Activated naive CD4-positive, alpha-beta T cell treated with anti-CD3 and anti-CD28 coated beads, Interleukin-2, amount 10 ng/mL, durations not matched to agents 7 days and 5 days (primary cell): ENCODE measurements at regions of chr9 and their contacts with region 1.

Region 1: DNA sequence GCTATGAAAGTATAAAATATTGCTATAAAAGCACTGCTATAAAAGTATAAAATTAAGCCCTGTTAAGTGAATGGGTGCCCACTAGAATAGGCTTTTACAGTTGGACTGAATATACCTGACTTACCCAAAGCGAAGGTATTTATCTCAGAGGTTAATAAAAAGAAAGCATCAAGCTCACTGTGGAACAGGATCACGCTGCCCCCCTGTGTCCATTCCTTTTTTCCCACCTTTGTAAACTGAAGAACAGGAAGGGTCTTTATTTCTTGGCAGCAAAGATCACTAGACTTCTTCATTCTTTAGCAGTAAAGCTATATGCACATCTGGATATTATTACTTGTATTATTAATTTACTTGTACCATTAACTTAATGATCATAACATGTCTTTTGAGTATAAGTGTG is 22.1 kb upstream of the PLPP6 start:
- DNase-seq: peak; percentile 71
- H3K4me3 Mint-ChIP-seq: no peak overlapping the region
- H3K27ac Mint-ChIP-seq: no peak overlapping the region
- H3K4me1 Mint-ChIP-seq: peaks cover 2% of the 10 kb centered on the region
- H3K27me3 Mint-ChIP-seq: no peaks in the 10 kb centered on the region

Region 2: DNA sequence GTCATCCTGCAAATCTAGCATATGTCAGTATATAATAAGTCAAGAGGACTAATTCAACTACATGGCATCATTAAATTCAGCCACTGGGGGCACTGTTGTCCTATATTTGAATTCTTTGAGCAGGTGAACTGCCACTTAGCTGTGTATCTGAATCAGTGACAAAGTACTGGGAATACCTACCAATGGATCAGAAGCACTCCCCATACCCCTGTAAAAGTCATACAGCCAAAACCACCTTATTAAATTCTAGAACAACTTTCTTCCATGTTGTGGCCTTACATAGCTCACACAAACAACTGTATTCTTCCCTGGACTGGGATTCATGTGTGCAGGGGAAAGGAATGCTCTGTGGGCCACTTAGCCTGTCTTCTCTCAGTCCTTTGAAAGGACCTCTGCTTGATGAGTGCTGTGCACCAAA is 35.3 kb before region 1 on chr9:
- CTCF ChIA-PET with region 1: interaction called, 15 read pairs
- DNase-seq: peak; percentile 75
- H3K4me3 Mint-ChIP-seq: no peak overlapping the region
- H3K27ac Mint-ChIP-seq: peak overlapping the region; percentile 45
- H3K4me1 Mint-ChIP-seq: peaks cover 29% of the 10 kb centered on the region
- H3K27me3 Mint-ChIP-seq: no peaks in the 10 kb centered on the region